Mammary epithelial cell (primary cell): ENCODE measurements at regions of chr11 and their contacts with region 1.

Region 1: DNA sequence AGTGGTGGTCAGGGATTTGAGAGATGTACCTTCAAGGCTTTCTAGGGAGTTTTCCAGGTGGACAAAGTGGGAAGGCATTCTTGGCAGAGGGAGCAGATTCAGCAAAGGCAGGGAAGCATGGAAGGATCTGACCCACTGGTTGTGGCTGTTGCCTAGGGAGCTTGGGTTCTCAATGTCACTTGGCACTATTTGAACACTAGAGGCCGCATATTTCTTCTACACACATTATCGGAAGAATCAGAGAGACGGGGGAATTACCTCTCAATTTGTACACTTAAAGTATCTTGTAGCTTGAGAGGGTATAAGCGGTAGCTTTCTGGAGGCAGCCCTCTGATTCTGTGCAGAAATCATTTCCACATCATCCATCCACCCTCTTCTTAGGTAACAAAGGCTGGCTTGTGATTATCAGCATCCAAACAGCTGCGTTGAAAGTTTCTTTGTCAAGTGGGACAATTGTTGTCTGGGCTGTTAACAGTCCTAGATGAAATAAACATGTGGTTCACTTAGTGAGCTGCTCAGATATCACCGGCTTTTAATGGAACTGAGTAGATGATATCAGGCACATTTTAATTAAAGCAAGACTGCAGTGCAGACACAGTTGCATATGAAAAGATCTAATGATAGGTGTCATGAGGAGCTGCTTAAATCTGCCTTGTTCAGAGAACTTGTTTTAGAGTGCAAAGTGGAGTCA is 2.6 kb downstream of the NELL1 start:
- DNase-seq: peak; percentile 6
- H3K4me3 ChIP-seq: no peak overlapping the region
- H3K27ac ChIP-seq: no peak overlapping the region
- H3K4me1 ChIP-seq: peaks cover 8% of the 10 kb centered on the region
- H3K27me3 ChIP-seq: peaks cover 39% of the 10 kb centered on the region
- CTCF ChIP-seq: peak; percentile 25 to 43

Region 2: GRCh38 chr11:20770414-20770946 is 98.5 kb after region 1 on chr11:
- CTCF ChIA-PET with region 1: no interaction called
- dilution Hi-C with region 1: no loop called
- in situ Hi-C with region 1: no loop called
- intact Hi-C with region 1: no loop called
- DNase-seq: no peak
- H3K4me3 ChIP-seq: no peak overlapping the region
- H3K27ac ChIP-seq: no peak overlapping the region
- H3K4me1 ChIP-seq: no peaks in the 10 kb centered on the region
- H3K27me3 ChIP-seq: no peaks in the 10 kb centered on the region
- CTCF ChIP-seq: no peak

Region 3: GRCh38 chr11:20887137-20887536 is 215.1 kb after region 1 on chr11:
- CTCF ChIA-PET with region 1: no interaction called
- dilution Hi-C with region 1: no loop called
- in situ Hi-C with region 1: no loop called
- intact Hi-C with region 1: no loop called
- DNase-seq: no peak
- H3K4me3 ChIP-seq: no peak overlapping the region
- H3K27ac ChIP-seq: no peak overlapping the region
- H3K4me1 ChIP-seq: no peaks in the 10 kb centered on the region
- H3K27me3 ChIP-seq: no peaks in the 10 kb centered on the region
- CTCF ChIP-seq: no peak

Region 4: DNA sequence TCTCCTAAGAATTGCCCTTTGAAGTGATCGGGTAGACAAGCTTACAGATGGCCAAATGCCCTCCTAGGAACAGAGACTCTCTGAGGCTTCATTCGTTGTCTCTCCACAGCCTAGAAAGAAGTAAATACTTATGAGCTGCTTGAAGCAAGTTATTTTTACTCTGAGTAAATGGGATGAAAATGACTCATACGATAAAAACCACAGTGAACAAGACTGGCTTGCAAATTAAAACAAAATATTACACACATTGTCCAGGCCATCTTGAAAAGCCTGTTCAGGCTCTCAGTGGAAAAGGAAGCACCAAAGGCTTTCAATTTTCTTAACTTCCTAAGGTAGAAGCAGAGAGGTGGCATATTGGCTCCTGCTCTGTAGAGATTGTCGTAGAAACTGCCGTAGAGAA is 291.6 kb after region 1 on chr11:
- CTCF ChIA-PET with region 1: no interaction called
- dilution Hi-C with region 1: no loop called
- in situ Hi-C with region 1: no loop called
- intact Hi-C with region 1: no loop called
- DNase-seq: peak; percentile 52
- H3K4me3 ChIP-seq: no peak overlapping the region
- H3K27ac ChIP-seq: no peak overlapping the region
- H3K4me1 ChIP-seq: no peaks in the 10 kb centered on the region
- H3K27me3 ChIP-seq: no peaks in the 10 kb centered on the region
- CTCF ChIP-seq: no peak

Region 5: GRCh38 chr11:21205205-21205604 is 533.2 kb after region 1 on chr11:
- CTCF ChIA-PET with region 1: no interaction called
- dilution Hi-C with region 1: no loop called
- in situ Hi-C with region 1: no loop called
- intact Hi-C with region 1: no loop called
- DNase-seq: no peak
- H3K4me3 ChIP-seq: no peak overlapping the region
- H3K27ac ChIP-seq: no peak overlapping the region
- H3K4me1 ChIP-seq: no peaks in the 10 kb centered on the region
- H3K27me3 ChIP-seq: no peaks in the 10 kb centered on the region
- CTCF ChIP-seq: no peak

Region 6: DNA sequence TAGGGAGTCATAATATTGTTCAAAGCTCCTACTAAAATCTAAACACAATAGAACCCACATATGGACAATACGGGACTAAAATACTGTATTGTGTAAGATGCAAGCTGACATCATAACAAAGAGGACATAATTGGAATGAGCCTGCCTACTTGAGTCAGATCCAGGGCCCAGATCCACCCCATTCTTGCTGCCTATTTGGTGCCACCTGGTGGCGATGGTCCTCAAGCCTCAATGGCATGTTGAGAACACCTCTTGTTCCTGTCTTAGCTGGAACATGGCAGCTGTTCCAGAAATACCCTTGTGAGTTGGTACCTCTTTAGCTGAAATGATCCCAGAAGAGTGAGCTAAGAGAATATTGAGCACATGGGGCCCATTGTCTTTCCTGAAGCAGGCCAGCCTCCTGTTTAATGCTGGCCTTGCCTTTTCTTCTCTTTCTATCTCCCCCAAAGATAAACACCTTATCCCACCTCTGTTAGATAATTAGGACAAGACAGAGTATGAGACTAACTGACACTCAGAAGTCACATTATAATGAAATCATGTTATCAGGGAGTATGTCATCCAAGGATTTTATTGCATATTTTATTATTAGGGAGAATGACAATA is 839.9 kb after region 1 on chr11:
- CTCF ChIA-PET with region 1: no interaction called
- dilution Hi-C with region 1: no loop called
- in situ Hi-C with region 1: loop called in 1 of 2 experiments (anchors 25 kb)
- intact Hi-C with region 1: no loop called
- DNase-seq: peak; percentile 67
- H3K4me3 ChIP-seq: no peak overlapping the region
- H3K27ac ChIP-seq: no peak overlapping the region
- H3K4me1 ChIP-seq: no peaks in the 10 kb centered on the region
- H3K27me3 ChIP-seq: no peaks in the 10 kb centered on the region
- CTCF ChIP-seq: peak; percentile 68 to 80